Activated CD4-positive, alpha-beta T cell treated with anti-CD3 and anti-CD28 coated beads, Interleukin-2, amount 10 ng/mL, durations not matched to agents 24 days and 14 days (primary cell): ENCODE measurements at regions of chr2 and their contacts with region 1.

Region 1: GRCh38 chr2:60976875-60977561 is 40.5 kb upstream of the PEX13 start:
- DNase-seq: no peak
- H3K4me3 Mint-ChIP-seq: no peak overlapping the region
- H3K27ac Mint-ChIP-seq: peak overlapping the region; percentile 46
- H3K4me1 Mint-ChIP-seq: peaks cover 30% of the 10 kb centered on the region
- H3K27me3 Mint-ChIP-seq: no peaks in the 10 kb centered on the region

Region 2: GRCh38 chr2:60818272-60818671 is 158.7 kb before region 1 on chr2:
- intact Hi-C with region 1: loop called (anchors 1 kb)
- DNase-seq: no peak
- H3K4me3 Mint-ChIP-seq: peak overlapping the region; percentile 61
- H3K27ac Mint-ChIP-seq: peak overlapping the region; percentile 91
- H3K4me1 Mint-ChIP-seq: peaks cover 51% of the 10 kb centered on the region
- H3K27me3 Mint-ChIP-seq: no peaks in the 10 kb centered on the region

Region 3: DNA sequence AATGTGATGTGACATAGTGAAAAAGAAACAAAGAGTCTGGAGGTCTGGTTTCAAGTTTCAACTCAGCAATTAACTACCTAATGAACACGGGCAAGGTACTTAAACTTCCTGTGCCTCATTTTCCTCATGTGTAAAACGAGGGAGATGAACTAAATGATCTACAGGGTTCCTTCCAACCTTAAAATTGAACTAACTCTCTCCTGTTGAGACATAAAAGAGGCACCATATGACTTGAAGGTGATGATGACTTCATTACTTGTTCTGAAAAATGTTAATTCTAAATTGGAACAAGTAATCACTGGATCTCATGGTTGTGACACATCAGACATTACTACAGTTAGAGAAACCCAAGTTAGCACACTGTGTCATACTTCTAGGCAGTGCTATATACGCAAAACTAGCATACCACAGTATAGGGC is 104.5 kb before region 1 on chr2:
- intact Hi-C with region 1: loop called (anchors 1 kb)
- DNase-seq: no peak
- H3K4me3 Mint-ChIP-seq: no peak overlapping the region
- H3K27ac Mint-ChIP-seq: peak overlapping the region; percentile 51
- H3K4me1 Mint-ChIP-seq: peaks cover 22% of the 10 kb centered on the region
- H3K27me3 Mint-ChIP-seq: no peaks in the 10 kb centered on the region

Region 4: DNA sequence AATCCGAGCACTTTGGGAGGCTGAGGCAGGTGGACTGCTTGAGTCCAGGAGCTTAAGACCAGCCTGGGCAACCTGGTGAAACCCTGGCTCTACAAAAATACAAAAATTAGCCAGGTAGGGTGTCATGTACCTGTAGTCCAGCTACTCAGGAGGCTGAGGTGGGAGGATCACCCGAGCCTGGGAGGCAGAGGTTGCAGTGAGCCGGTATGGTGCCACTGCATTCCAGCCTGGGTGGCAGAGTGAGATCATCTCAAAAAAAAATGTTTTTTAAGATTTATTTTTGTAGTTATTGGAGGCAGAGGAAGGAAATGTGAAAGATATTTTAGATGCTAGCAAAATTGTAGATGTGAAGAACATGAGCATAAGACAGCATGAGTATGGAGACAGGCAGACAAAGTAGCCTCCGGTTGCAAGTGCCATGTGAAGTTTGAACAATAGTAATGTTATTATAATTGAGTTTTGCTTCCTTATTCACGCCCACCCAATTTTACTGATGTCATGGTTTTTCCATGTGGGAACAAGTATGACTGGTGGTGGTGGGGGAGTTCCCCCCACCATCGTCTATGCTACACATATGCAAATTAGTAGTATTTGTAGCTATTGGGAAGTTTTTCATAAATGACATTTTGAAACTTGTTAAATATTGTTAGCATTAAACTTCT is 77.7 kb before region 1 on chr2:
- intact Hi-C with region 1: loop called (anchors 1 kb)
- DNase-seq: no peak
- H3K4me3 Mint-ChIP-seq: peak overlapping the region; percentile 58
- H3K27ac Mint-ChIP-seq: peak overlapping the region; percentile 90
- H3K4me1 Mint-ChIP-seq: peaks cover 37% of the 10 kb centered on the region
- H3K27me3 Mint-ChIP-seq: no peaks in the 10 kb centered on the region

Region 5: GRCh38 chr2:60992985-60993392 is 16.0 kb after region 1 on chr2:
- intact Hi-C with region 1: loop called (anchors 2 kb)
- DNase-seq: peak; percentile 68
- H3K4me3 Mint-ChIP-seq: no peak overlapping the region
- H3K27ac Mint-ChIP-seq: peak overlapping the region; percentile 45
- H3K4me1 Mint-ChIP-seq: peaks cover 7% of the 10 kb centered on the region
- H3K27me3 Mint-ChIP-seq: no peaks in the 10 kb centered on the region